Sigmoid colon (tissue), 7 donors: ENCODE measurements at regions of chr10 and their contacts with region 1.

Region 1: DNA sequence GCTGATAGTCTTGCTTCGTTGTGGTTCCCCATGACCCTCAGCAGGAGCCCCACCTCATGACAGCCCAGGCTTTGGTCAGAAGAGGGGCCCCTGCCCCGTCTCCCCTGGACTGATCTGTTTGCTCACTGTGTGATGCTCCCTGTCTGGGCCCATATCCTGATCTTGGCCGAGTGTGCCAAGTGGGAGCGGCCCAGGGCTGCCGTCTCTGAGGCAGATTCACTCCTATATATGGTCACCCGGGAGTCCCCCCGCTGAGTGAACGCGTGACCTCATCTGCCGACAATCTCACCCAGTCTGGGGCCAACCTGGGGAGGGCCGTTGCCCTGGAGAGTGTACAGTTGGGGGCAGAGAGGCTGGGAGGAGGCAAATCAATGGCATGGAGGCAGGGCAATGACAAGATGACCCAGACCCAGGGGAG is 34.5 kb downstream of the PPIF start:
- DNase-seq: peak; percentile 97
- H3K4me3 ChIP-seq: peak overlapping the region in 1 of 4 donors; percentile 3
- H3K27ac ChIP-seq: peak overlapping the region in 2 of 4 donors; percentile 90 to 91
- H3K4me1 ChIP-seq: peaks cover 3 to 59% (median 53%) of the 10 kb centered on the region in 4 donors
- H3K27me3 ChIP-seq: no peaks in the 10 kb centered on the region
- CTCF ChIP-seq: no peak
- EP300 ChIP-seq: peak in 2 of 4 donors; percentile 32 to 58
- POLR2A ChIP-seq: no peak

Region 2: GRCh38 chr10:79260786-79261740 is 120.8 kb before region 1 on chr10:
- intact Hi-C with region 1: no loop called
- DNase-seq: peak; percentile 90
- H3K4me3 ChIP-seq: peak overlapping the region in 1 of 4 donors; percentile 12
- H3K27ac ChIP-seq: peak overlapping the region; percentile 61 to 96 (median 90)
- H3K4me1 ChIP-seq: peaks cover 0 to 90% (median 80%) of the 10 kb centered on the region in 4 donors
- H3K27me3 ChIP-seq: no peaks in the 10 kb centered on the region
- CTCF ChIP-seq: no peak
- EP300 ChIP-seq: peak in 2 of 4 donors; percentile 29 to 34
- POLR2A ChIP-seq: peak in 1 of 2 donors; percentile 6

Region 3: GRCh38 chr10:79438021-79438698 is 56.3 kb after region 1 on chr10:
- intact Hi-C with region 1: loop called (anchors 2 kb)
- DNase-seq: peak; percentile 74
- H3K4me3 ChIP-seq: peak overlapping the region in 2 of 4 donors; percentile 6 to 19
- H3K27ac ChIP-seq: peak overlapping the region in 3 of 4 donors; percentile 98 to 100 (median 99)
- H3K4me1 ChIP-seq: peaks cover 0 to 100% (median 100%) of the 10 kb centered on the region in 4 donors
- H3K27me3 ChIP-seq: no peaks in the 10 kb centered on the region
- CTCF ChIP-seq: peak in 3 of 4 experiments; percentile 39 to 58 (median 57)
- EP300 ChIP-seq: no peak
- POLR2A ChIP-seq: no peak